Keratinocyte (primary cell): ENCODE measurements at regions of chr17 and their contacts with region 1.

Region 1: DNA sequence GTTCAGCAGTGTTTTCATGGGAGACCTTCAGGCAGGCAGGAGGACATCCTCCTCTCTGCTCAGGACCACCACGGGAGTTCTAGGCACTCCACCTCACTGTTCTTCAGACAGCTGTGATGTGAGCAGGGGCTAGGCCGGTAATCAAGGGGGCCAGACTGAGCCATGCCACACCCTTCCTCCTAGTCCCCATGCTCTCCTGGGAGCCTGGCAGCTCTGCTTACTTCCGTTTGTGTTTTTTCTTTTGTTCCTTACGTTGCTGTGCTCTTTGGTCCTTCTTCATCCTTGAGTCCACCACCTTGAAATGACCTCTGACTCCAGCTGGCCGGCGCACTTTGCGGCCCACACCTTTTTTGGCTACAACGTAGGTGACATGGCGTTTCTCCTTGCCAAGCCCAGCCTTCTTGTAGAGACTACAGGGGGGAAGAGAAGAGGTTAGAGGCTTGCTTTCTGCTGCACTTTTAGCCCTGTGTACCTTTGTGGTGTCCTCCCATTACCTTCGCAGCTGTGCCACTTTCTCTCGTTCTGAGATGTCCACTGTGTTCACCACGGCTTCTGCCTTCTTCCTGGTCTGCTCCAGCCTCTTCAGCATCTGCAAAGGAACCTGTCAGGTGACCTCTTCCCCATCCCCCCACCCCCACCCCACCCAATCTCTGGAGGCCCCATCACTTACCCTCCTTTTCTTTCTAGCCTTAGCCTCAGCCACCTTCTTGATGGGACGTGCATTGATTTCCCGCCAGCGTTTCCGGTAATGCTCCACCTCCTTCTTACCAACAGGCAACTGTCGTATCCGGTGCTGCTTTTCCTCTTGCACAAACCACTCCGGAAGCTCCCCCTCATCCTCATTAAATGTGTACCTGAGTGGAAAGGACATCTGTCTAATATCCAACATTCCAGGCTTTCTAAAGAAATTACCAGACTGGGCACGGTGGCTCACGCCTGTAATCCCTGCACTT is 7.4 kb upstream of the PSMC5 start:
- DNase-seq: no peak
- H3K4me3 ChIP-seq: no peak overlapping the region
- H3K27ac ChIP-seq: no peak overlapping the region
- H3K4me1 ChIP-seq: no peaks in the 10 kb centered on the region
- H3K27me3 ChIP-seq: no peaks in the 10 kb centered on the region
- CTCF ChIP-seq: no peak

Region 2: GRCh38 chr17:63780522-63780921 is 39.3 kb before region 1 on chr17:
- dilution Hi-C with region 1: loop called (anchors 5 kb)
- DNase-seq: no peak
- H3K4me3 ChIP-seq: peak overlapping the region in 1 of 3 experiments; percentile 31
- H3K27ac ChIP-seq: peak overlapping the region; percentile 79
- H3K4me1 ChIP-seq: peaks cover 56% of the 10 kb centered on the region
- H3K27me3 ChIP-seq: no peaks in the 10 kb centered on the region
- CTCF ChIP-seq: no peak